ENCODE measurements at regions of chr13 and their contacts with region 1.

Region 1: DNA sequence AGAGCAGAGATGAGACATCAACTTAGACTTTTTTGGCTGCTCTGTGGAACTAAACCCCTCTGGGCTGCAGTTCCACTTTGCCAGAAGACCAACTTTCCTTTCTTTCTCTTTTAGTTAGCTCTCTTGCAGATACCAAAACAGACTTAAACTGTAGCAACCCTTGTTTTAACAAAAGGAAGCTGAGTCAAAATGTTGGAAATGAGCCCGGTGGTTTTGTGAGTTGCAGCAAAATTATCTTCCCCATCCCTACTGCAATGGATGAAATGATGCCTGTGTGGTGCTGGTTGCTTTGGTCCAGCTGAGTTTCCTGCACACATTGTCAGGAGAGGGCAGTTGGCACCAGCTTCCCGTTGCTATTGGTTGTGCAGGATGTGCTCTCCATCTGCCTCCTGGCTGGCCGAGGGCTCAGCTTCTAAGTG is 115.3 kb downstream of the LRCH1 start:
- DNase-seq: no peak

Region 2: DNA sequence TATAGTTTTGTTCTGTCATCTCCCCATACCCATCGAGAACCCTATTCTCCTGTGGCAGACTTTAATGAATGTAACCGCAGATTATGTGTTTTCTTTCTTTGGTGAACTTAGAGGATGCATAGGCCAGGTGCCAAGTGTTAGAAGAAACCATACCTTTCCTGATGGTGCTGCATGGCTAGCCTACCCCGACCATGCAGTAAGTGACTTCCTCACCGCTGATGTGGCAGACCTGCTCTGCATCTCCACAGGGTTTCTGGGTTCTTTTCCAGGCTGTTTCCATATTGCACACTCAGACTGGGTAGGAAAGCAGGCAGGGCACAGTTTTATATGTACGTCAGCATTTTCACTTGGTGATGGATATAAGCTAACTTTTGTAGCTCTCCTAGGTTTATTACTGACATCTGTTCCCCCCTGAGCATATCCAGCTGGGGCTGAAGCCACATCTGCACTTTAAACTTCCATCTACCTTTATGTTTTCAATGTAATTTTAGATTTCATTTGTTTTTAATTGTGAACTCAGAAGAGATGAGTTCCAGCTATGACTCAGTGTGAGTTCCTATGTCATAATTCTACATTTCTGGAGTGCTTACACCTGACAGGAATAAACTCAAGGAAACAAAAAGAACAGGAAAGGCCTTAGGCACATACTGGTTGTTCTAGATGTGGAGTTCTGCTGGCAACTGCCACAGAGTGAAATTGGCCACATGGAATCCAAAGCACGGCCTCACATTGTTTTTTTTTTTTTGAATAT is 73.0 kb before region 1 on chr13:
- intact Hi-C with region 1: loop called in 1 of 2 experiments (anchors 10 kb)
- DNase-seq: no peak

Region 3: GRCh38 chr13:46605825-46606554 is 62.3 kb before region 1 on chr13:
- intact Hi-C with region 1: no loop called
- DNase-seq: no peak